ENCODE measurements at regions of chr15 and their contacts with region 1.

Region 1: DNA sequence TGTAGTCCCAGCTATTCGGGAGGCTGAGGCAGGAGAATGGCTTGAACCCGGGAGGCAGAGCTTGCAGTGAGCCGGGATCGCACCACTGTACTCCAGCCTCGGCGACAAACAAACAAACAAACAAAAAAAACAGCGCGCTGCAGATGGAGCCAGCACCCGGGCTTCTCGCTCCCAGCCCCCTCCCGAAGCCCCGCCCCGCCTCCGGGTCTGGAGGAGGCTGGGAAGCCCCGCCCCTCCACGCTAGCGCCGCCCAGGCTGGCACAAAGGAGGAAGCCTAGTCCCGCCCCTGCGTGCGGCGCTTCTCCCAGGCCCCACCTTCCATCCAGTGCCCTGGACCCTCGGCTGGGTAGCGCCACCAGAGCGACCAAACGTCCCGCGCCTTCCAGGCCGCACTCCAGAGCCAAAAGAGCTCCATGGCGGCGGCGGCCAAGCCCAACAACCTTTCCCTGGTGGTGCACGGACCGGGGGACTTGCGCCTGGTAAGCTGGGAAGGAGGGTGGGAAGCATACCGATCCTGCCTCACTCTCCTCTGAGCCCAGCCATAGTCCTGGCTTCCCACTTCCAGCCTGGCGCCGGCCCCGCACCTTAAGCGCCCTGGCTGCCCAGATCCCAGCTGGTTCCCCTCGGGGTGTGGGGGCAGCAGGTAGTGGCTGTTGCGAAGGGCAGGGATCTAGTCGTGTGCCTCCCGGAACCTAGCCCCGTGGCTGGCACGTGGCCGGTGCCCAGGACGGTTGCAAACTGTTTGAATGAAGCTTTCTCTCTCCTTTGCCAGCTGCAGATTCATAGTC is at the start of gene SORD:
- DNase-seq: no peak
- H3K4me3 ChIP-seq: peak within 1 kb of the TSS; percentile 85
- CTCF ChIP-seq: no peak

Region 2: DNA sequence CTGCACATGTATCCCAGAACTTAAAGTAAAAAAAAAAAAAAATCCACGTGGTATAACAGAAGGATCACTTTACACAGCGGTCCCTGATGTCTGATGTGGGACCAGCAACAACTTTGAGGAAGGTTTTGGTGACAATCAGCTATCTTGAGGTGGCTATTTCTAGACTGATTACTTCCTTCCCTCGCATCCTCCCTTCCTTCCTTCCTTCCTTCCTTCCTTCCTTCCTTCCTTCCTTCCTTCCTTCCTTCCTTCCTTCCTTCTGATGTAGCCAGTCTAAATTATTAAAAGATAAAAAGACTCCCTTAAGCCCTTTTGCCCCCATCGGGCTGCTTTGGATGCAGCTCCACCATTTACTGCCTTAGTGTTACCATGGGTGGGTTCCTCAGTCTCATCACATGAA is 14.9 kb after region 1 on chr15:
- CTCF ChIA-PET with region 1: interaction called, 21 read pairs
- POLR2A ChIA-PET with region 1: no interaction called
- DNase-seq: no peak
- H3K4me3 ChIP-seq: no peak overlapping the region
- CTCF ChIP-seq: no peak

Region 3: GRCh38 chr15:45048794-45049631 is 25.9 kb after region 1 on chr15:
- CTCF ChIA-PET with region 1: no interaction called
- POLR2A ChIA-PET with region 1: no interaction called
- DNase-seq: no peak
- H3K4me3 ChIP-seq: no peak overlapping the region
- CTCF ChIP-seq: no peak